Activated naive CD4-positive, alpha-beta T cell treated with anti-CD3 and anti-CD28 coated beads for 36 hours (primary cell): ENCODE measurements at regions of chr11 and their contacts with region 1.

Region 1: GRCh38 chr11:3609416-3610265 is 32.2 kb downstream of the ART5 start:
- DNase-seq: peak; percentile 43
- H3K4me3 Mint-ChIP-seq: no peak overlapping the region
- H3K27ac Mint-ChIP-seq: no peak overlapping the region
- H3K4me1 Mint-ChIP-seq: peaks cover 9% of the 10 kb centered on the region
- H3K27me3 Mint-ChIP-seq: no peaks in the 10 kb centered on the region

Region 2: GRCh38 chr11:3626308-3626951 is 16.8 kb after region 1 on chr11:
- CTCF ChIA-PET with region 1: interaction called, 12 read pairs
- intact Hi-C with region 1: no loop called
- DNase-seq: peak; percentile 34
- H3K4me3 Mint-ChIP-seq: no peak overlapping the region
- H3K27ac Mint-ChIP-seq: no peak overlapping the region
- H3K4me1 Mint-ChIP-seq: peaks cover 6% of the 10 kb centered on the region
- H3K27me3 Mint-ChIP-seq: no peaks in the 10 kb centered on the region